ENCODE measurements at regions of chr3 and their contacts with region 1.

Region 1: DNA sequence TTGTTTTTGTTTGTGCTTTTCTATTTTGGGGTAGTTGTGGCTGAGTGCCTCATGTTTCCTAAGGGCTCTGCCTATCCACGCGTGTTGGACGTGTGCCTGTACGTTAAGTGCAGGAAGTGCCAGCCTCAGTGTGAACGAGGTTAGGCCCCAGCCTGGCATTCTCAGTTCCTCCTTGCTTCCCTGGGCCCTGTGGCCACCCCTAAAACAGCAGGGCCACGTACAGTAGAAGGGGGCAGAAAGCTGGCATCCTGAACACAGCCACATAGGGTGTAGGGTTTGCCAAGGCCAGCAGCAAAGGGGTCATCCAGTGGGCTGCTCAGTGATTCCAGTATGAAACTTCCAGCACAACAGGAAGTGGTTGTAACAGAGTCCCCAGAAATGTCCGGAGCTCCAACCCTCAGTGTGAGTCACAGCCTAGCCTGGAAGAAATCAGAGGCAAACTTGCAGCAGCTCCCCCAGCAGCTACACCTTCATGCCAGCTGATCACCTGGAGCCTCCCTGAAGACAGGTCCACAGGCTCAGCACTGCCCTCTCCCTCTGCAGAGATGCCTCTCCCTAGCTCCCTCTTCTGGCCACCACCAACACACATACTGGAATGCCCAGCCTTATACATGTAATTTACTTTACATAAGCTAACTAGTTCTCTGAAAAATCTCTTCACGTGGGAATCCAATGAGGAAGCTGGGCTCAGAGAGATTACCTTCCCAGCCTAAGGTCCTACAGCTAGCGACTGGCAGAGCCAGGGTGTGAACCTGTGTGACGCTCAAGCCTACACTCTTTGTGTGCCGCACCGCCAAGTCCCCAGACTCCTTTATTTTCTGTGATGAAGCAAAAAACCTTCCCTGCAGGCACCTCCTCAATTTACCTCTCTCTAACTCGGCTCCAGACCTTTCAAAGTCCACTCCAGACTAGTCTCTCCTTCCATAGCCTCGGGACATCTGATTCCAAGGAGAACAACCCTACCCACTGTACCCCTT is 26.6 kb downstream of the ILDR1 start:
- DNase-seq: peak; percentile 79
- ATAC-seq: peak; percentile 99
- H3K4me3 Mint-ChIP-seq: no peak overlapping the region
- H3K27ac Mint-ChIP-seq: no peak overlapping the region
- H3K4me1 Mint-ChIP-seq: peaks cover 13% of the 10 kb centered on the region
- H3K27me3 Mint-ChIP-seq: no peaks in the 10 kb centered on the region
- CTCF ChIP-seq: peak; percentile 62; the same call in 1 of the 2 replicates

Region 2: DNA sequence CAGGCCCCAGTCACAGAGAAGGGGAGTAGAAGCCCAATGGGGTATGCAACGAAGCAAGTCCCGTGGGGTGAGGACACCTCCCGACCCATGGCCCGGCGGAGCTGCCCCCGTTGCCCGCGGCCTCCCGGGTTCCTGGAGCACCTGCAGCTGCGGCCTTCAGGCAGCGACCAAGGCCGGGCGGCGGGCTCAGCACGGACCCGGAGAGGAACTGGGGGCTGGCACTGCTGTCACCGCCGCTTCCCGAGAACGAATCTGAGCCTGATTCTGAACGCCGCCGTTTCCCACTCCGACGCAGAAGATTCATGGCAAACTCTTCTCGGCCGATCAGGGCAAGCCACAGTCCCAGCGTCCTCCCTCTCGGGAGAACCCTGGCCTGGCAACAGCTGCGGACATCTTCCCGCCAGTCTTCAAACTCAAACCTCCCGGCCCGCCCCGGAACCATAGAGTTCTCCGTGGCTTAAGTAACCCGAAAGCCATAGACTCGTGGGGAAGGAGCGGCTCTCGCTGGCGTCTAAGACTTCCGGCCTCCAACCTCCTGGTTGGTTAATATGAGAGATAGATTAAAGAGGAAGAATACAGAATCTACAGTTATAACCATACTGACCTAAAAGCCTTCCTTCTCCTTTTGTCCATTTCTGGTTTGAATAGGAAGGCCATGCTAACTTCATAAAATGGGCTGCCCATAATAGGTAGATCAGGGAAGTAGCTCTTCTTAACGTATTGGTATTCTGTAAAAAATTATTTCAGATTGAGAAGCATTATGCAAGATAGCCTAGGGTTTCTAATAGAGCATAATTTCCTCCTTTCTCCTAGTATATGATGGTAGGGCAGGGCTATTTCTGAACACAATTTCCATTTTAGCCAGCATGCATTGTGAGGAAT is 449.6 kb before region 1 on chr3 and contains the start of gene POLQ:
- CTCF ChIA-PET with region 1: interaction called, 17 read pairs
- POLR2A ChIA-PET with region 1: no interaction called
- DNase-seq: peak; percentile 83
- ATAC-seq: peak; percentile 94
- H3K4me3 Mint-ChIP-seq: peak within 1 kb of the TSS; percentile 98
- H3K27ac Mint-ChIP-seq: peak within 1 kb of the TSS; percentile 94
- H3K4me1 Mint-ChIP-seq: peaks cover 20% of the 10 kb centered on the region
- H3K27me3 Mint-ChIP-seq: no peaks in the 10 kb centered on the region
- CTCF ChIP-seq: no peak
- total RNA-seq, gene POLQ: 14.9 to 16.8 TPM (median 16.2 TPM) in 3 replicates

Region 3: DNA sequence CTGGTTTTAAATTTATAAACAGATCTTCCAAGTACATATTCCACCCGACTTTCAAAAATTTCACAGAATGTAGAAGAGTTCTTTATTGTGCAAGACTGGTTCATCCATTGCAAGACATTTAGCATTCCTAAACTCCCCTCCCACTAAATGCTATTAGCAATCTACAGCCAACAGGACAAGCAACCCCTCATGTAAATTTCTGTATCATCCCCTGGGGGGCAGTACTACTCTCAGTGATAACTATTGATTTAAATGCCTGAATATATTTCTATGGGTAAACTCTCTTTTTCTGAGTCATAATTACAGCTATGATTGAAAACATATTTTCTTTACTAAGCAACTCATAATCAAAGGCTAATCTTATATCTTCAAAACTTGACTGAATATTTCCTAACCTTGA is 111.9 kb before region 1 on chr3:
- CTCF ChIA-PET with region 1: interaction called, 27 read pairs
- POLR2A ChIA-PET with region 1: no interaction called
- DNase-seq: no peak
- ATAC-seq: peak; percentile 87
- H3K4me3 Mint-ChIP-seq: no peak overlapping the region
- H3K27ac Mint-ChIP-seq: no peak overlapping the region
- H3K4me1 Mint-ChIP-seq: peaks cover 20% of the 10 kb centered on the region
- H3K27me3 Mint-ChIP-seq: no peaks in the 10 kb centered on the region
- CTCF ChIP-seq: 0 out of 2 replicates have a peak, but pooled peaks have one; percentile 18

Region 4: GRCh38 chr3:121914081-121914998 is 81.1 kb before region 1 on chr3:
- CTCF ChIA-PET with region 1: interaction called, 16 read pairs
- POLR2A ChIA-PET with region 1: no interaction called
- DNase-seq: peak; percentile 14
- ATAC-seq: peak; percentile 56
- H3K4me3 Mint-ChIP-seq: no peak overlapping the region
- H3K27ac Mint-ChIP-seq: 0 out of 2 replicates have a peak overlapping the region, but pooled peaks have one; percentile 15
- H3K4me1 Mint-ChIP-seq: peaks cover 14% of the 10 kb centered on the region
- H3K27me3 Mint-ChIP-seq: no peaks in the 10 kb centered on the region
- CTCF ChIP-seq: no peak

Region 5: DNA sequence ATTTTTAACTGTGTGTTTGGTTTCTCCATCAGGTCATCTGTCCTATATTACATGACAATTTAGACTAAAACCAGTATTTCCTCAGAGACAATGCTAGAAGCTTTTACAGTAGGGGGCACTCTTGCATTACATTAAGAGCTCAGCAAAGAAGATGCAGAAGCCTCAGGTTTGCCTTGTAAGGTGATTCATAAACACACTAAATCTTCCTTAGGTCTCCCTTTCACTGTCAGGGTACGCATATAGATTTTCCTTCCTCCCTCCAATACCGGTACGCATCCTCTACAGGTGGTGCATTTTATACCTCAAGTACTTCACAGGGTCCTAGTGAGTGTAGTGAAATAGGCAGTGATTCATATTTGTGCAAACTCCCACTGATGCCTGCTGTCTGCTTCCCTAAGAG is 106.2 kb after region 1 on chr3:
- CTCF ChIA-PET with region 1: interaction called, 11 read pairs
- POLR2A ChIA-PET with region 1: no interaction called
- DNase-seq: no peak
- ATAC-seq: peak; percentile 86
- H3K4me3 Mint-ChIP-seq: no peak overlapping the region
- H3K27ac Mint-ChIP-seq: no peak overlapping the region
- H3K4me1 Mint-ChIP-seq: peaks cover 4% of the 10 kb centered on the region; the same call in 1 of the 2 replicates
- H3K27me3 Mint-ChIP-seq: no peaks in the 10 kb centered on the region
- CTCF ChIP-seq: no peak; the same call in 1 of the 2 replicates

Region 6: GRCh38 chr3:122233101-122233952 is 237.9 kb after region 1 on chr3:
- CTCF ChIA-PET with region 1: no interaction called
- POLR2A ChIA-PET with region 1: no interaction called
- DNase-seq: no peak
- ATAC-seq: no peak
- H3K4me3 Mint-ChIP-seq: no peak overlapping the region
- H3K27ac Mint-ChIP-seq: no peak overlapping the region
- H3K4me1 Mint-ChIP-seq: peaks cover 5% of the 10 kb centered on the region
- H3K27me3 Mint-ChIP-seq: peaks cover 1% of the 10 kb centered on the region; the same call in 1 of the 2 replicates
- CTCF ChIP-seq: no peak